Caki2 (cell line): ENCODE measurements at regions of chr16 and their contacts with region 1.

Region 1: DNA sequence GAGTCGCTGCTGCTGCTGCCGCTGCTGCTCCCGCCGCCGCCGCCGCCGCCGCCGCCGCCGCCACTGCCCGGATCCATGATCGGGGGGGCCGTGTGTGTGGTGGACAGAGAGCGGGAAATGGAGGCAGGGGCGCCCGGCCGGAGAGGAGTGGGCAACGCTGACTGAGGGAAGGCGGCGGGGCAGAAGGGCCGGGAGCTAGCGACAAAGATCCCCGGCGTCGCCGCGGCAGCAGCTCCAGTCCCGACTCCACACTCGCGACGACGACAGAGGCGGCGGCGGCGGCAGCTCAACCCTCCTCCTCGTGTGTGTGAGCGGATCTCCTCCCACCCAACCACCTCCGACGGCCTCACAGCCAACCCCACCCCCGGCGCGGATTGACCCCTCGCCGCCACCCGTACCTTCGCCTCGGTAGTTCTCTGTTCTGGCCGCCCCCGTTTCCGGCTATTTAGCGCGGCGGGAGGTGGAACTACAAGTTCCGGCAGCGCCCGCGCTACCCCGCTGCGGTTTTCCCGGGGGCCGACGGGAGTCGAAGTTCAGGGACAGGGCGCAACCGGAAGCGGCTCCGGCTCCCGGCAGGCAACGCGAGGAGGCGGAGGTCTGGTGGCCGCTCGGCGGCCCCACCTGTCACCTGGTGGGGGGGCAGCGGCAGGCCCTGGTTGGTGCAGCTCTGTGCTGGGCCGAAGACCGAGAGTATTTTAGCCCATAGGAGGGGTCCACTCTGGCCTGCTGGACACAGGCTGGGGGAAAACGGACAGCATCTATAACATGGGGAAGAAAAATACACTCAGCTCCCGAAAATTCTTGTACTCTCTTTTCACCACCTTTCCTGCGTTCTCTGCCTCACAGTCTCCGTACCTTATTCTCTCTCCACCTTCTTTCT is at the start of gene GSPT1:
- DNase-seq: peak; percentile 99
- total RNA-seq, gene GSPT1: 19.2 and 35.4 TPM in 2 replicates

Region 2: GRCh38 chr16:12002447-12003006 is 86.6 kb after region 1 on chr16:
- in situ Hi-C with region 1: loop called (anchors 10 kb)
- DNase-seq: no peak